Right ventricle myocardium inferior (tissue), 1 donor: ENCODE measurements at regions of chr10 and their contacts with region 1.

Region 1: DNA sequence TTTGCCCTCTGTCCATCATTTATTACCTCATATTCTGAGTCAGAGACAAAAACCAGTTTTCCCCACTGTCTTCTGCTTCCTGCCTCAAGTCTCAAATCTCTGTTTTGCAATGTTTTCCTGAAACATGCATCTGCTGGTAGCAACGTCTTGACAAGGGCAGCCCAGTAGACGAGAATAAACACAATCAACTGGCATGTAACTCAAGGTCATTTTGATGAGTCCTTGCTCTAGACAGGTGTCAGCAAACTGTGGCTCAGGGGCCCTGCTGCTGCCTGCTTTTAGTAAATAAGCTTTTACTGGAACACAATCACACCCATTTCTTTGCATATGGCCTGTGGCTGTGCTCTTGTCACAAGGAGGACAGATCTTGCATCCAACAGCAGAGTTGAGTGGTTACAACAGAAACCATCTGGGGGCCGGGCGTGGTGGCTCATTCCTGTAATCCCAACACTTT is 59.8 kb downstream of the ITIH5 start:
- DNase-seq: no peak
- ATAC-seq: peak; percentile 53

Region 2: GRCh38 chr10:7547829-7548228 is 59.1 kb before region 1 on chr10:
- intact Hi-C with region 1: loop called (anchors 5 kb)
- DNase-seq: no peak
- ATAC-seq: peak; percentile 53

Region 3: DNA sequence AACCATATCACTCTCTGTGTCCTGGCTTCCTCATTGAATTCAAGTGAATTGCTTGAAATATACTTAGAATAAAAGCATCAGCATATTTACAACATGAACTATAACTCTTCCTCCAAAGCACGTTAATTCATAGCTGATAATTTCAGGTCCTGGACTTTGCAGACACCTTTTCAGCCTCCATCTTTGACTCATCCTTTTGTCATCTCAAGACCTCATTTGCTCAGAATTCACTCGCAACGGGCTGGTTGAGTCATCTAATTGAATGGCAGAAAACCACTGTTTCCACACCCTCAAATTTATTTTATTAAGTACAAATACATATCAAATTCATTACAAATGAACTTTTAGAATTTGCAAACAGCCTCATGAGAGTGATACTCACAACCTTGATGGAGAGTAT is 993.2 kb after region 1 on chr10:
- intact Hi-C with region 1: no loop called
- DNase-seq: no peak
- ATAC-seq: no peak